ENCODE measurements at regions of chr11 and their contacts with region 1.

Region 1: GRCh38 chr11:83827940-83828554 is 541.9 kb upstream of the CCDC90B start:
- DNase-seq: peak in 1 of 2 experiments; percentile 54
- H3K4me3 ChIP-seq: no peak overlapping the region
- H3K4me3 Mint-ChIP-seq: no peak overlapping the region
- H3K27ac Mint-ChIP-seq: no peak overlapping the region
- H3K4me1 ChIP-seq: no peaks in the 10 kb centered on the region
- H3K4me1 Mint-ChIP-seq: no peaks in the 10 kb centered on the region
- H3K27me3 ChIP-seq: no peaks in the 10 kb centered on the region
- H3K27me3 Mint-ChIP-seq: peaks cover 10% of the 10 kb centered on the region
- CTCF ChIP-seq: peak; percentile 78

Region 2: GRCh38 chr11:84140161-84140891 is 312.3 kb after region 1 on chr11:
- CTCF ChIA-PET with region 1: no interaction called
- POLR2A ChIA-PET with region 1: no interaction called
- intact Hi-C with region 1: loop called (anchors 2 kb)
- DNase-seq: no peak
- H3K4me3 ChIP-seq: no peak overlapping the region
- H3K4me3 Mint-ChIP-seq: no peak overlapping the region
- H3K27ac Mint-ChIP-seq: no peak overlapping the region
- H3K4me1 ChIP-seq: no peaks in the 10 kb centered on the region
- H3K4me1 Mint-ChIP-seq: peaks cover 5% of the 10 kb centered on the region
- H3K27me3 ChIP-seq: no peaks in the 10 kb centered on the region; the same call in 1 of the 2 replicates
- H3K27me3 Mint-ChIP-seq: peaks cover 12% of the 10 kb centered on the region
- CTCF ChIP-seq: no peak

Region 3: GRCh38 chr11:84146826-84147225 is 318.8 kb after region 1 on chr11:
- CTCF ChIA-PET with region 1: no interaction called
- POLR2A ChIA-PET with region 1: no interaction called
- intact Hi-C with region 1: loop called (anchors 2 kb)
- DNase-seq: no peak
- H3K4me3 ChIP-seq: no peak overlapping the region
- H3K4me3 Mint-ChIP-seq: no peak overlapping the region
- H3K27ac Mint-ChIP-seq: no peak overlapping the region
- H3K4me1 ChIP-seq: no peaks in the 10 kb centered on the region
- H3K4me1 Mint-ChIP-seq: no peaks in the 10 kb centered on the region
- H3K27me3 ChIP-seq: no peaks in the 10 kb centered on the region
- H3K27me3 Mint-ChIP-seq: peaks cover 6% of the 10 kb centered on the region
- CTCF ChIP-seq: peak; percentile 34 to 35

Region 4: GRCh38 chr11:84261707-84262106 is 433.7 kb after region 1 on chr11:
- CTCF ChIA-PET with region 1: no interaction called
- POLR2A ChIA-PET with region 1: no interaction called
- intact Hi-C with region 1: loop called (anchors 2 kb)
- DNase-seq: no peak
- H3K4me3 ChIP-seq: no peak overlapping the region
- H3K4me3 Mint-ChIP-seq: no peak overlapping the region
- H3K27ac Mint-ChIP-seq: no peak overlapping the region
- H3K4me1 ChIP-seq: no peaks in the 10 kb centered on the region
- H3K4me1 Mint-ChIP-seq: no peaks in the 10 kb centered on the region
- H3K27me3 ChIP-seq: no peaks in the 10 kb centered on the region; the same call in 1 of the 2 replicates
- H3K27me3 Mint-ChIP-seq: peaks cover 5% of the 10 kb centered on the region
- CTCF ChIP-seq: peak; percentile 15 to 41

Region 5: GRCh38 chr11:84384731-84385130 is 556.7 kb after region 1 on chr11:
- CTCF ChIA-PET with region 1: no interaction called
- POLR2A ChIA-PET with region 1: no interaction called
- intact Hi-C with region 1: loop called (anchors 2 kb)
- DNase-seq: peak; percentile 60 to 68
- H3K4me3 ChIP-seq: no peak overlapping the region
- H3K4me3 Mint-ChIP-seq: no peak overlapping the region
- H3K27ac Mint-ChIP-seq: no peak overlapping the region
- H3K4me1 ChIP-seq: no peaks in the 10 kb centered on the region
- H3K4me1 Mint-ChIP-seq: no peaks in the 10 kb centered on the region
- H3K27me3 ChIP-seq: no peaks in the 10 kb centered on the region; the same call in 1 of the 2 replicates
- H3K27me3 Mint-ChIP-seq: no peaks in the 10 kb centered on the region
- CTCF ChIP-seq: peak; percentile 93 to 96

Region 6: DNA sequence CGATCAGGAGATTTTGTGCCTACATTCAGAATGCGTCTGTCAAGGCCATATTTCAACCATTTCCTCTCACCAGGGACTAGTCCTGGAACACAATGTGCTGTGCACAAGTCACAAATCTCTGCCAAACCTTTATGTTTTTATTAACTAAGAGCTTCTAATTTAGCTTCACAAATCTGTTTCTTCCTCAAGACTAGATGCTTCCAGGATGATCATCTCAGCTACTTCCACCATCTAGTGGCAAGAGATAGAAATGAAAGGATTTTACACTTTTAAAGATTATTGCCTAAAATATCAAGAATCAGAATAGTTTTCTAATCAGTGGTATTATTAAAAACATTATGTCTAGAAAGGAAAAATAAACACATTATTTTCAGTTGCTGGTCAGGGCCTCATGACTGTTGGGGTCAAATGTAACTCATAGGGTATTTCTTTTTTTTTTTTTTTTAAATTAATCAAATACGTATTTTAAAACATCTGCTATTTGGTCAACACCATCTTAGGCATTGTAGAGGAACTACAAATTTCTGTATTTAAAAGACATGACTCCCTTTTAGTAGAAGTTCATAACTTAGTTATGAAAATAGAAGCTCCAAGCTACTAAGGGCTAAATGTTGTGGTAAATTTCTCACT is 696.5 kb after region 1 on chr11:
- CTCF ChIA-PET with region 1: interaction called, 4 read pairs
- POLR2A ChIA-PET with region 1: no interaction called
- intact Hi-C with region 1: loop called (anchors 1 kb)
- DNase-seq: no peak
- H3K4me3 ChIP-seq: no peak overlapping the region
- H3K4me3 Mint-ChIP-seq: no peak overlapping the region
- H3K27ac Mint-ChIP-seq: no peak overlapping the region
- H3K4me1 ChIP-seq: no peaks in the 10 kb centered on the region
- H3K4me1 Mint-ChIP-seq: no peaks in the 10 kb centered on the region
- H3K27me3 ChIP-seq: no peaks in the 10 kb centered on the region; the same call in 1 of the 2 replicates
- H3K27me3 Mint-ChIP-seq: peaks cover 13% of the 10 kb centered on the region
- CTCF ChIP-seq: peak; percentile 74 to 78

Region 7: DNA sequence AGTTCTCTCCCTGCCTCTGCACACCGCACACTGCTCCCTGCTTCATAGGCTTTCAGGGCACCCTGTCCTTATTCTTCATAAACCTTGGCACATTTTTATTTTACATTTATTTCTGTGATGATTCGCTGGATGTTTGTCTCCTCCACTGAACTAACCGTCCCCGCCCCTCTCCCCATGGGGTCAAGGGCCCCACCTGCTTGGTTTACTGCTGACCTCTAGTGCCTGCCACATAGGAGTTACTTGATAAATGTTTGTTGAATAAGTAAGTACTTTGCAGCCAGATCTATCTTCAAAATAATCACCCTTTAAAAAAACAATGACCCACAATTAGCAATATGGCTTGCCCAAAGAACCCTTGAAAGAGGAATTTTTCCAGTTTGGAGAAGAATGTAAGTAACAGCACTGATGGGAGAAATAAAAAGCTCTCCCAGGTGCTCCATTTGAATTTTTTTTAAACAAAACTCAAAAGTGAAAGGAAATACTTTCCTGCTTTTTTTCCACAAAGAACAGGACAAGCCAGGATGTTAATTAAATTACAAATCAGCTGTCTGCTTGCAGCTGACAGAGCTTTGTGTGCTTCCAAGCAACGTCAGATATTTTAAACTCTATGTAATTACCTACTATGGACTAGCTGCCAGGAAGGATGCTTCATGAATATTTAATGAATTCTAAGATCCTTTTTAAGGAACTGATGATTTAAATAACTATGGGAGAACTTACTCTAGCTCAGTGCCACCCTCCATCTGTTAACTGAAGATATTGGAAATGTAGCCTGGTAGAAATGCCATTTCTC is 715.5 kb after region 1 on chr11:
- CTCF ChIA-PET with region 1: no interaction called
- POLR2A ChIA-PET with region 1: no interaction called
- intact Hi-C with region 1: loop called (anchors 5 kb)
- DNase-seq: peak in 1 of 2 experiments; percentile 23
- H3K4me3 ChIP-seq: no peak overlapping the region
- H3K4me3 Mint-ChIP-seq: no peak overlapping the region
- H3K27ac Mint-ChIP-seq: no peak overlapping the region
- H3K4me1 ChIP-seq: no peaks in the 10 kb centered on the region
- H3K4me1 Mint-ChIP-seq: no peaks in the 10 kb centered on the region
- H3K27me3 ChIP-seq: no peaks in the 10 kb centered on the region
- H3K27me3 Mint-ChIP-seq: peaks cover 13% of the 10 kb centered on the region
- CTCF ChIP-seq: peak in 1 of 2 experiments; percentile 17

Measured in Caco-2 (cell line).